ENCODE measurements at regions of chr1 and their contacts with region 1.

Region 1: DNA sequence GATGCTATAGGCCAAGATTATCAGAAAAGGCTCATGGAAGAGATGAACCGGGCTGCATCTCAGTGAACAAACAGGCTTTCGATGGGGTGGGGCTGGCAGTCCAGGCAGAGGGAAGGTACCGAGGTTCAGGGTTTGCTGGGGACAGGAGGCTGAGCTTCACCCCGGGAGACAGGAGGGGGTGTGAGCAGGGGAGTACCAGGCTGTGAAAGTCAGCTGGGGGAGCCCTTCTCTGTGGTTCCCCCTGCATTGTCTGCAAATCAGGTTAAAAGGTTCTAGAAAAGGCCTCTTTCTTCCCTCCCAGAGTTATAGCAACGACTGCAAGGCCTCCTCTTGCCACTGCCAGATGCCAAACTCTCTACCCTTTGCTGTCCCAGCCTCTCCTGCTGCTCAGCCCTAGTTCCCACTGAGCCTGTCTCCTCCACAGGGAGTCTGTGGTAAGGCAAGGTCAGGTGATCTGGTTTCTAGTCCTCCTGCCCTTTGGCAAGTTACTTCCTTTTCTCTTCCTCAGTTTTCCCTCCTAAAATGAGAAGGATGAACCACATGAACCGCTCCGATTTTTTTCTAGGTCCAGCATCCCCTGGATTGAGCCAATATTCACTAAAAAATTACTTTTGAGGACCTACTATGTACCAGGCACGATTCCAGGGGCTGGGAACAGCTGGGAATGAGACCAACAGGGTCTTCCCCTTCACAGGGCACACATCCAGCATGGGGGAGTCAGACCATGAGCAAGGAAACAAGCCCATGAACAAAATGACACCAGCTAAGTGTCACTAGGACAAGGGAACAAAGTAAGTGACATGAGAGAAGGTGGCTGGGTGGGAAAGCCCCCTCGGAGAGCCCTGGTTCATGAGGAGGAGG is 7.2 kb downstream of the LAD1 start:
- DNase-seq: no peak
- H3K4me3 Mint-ChIP-seq: no peak overlapping the region
- H3K27ac Mint-ChIP-seq: no peak overlapping the region
- H3K4me1 Mint-ChIP-seq: peaks cover 9% of the 10 kb centered on the region
- H3K27me3 Mint-ChIP-seq: no peaks in the 10 kb centered on the region
- CTCF ChIP-seq: no peak

Region 2: GRCh38 chr1:201181325-201182123 is 210.4 kb before region 1 on chr1:
- CTCF ChIA-PET with region 1: no interaction called
- POLR2A ChIA-PET with region 1: no interaction called
- intact Hi-C with region 1: no loop called
- DNase-seq: no peak
- H3K4me3 Mint-ChIP-seq: no peak overlapping the region
- H3K27ac Mint-ChIP-seq: no peak overlapping the region
- H3K4me1 Mint-ChIP-seq: peaks cover 14% of the 10 kb centered on the region
- H3K27me3 Mint-ChIP-seq: peaks cover 15% of the 10 kb centered on the region
- CTCF ChIP-seq: no peak

Region 3: DNA sequence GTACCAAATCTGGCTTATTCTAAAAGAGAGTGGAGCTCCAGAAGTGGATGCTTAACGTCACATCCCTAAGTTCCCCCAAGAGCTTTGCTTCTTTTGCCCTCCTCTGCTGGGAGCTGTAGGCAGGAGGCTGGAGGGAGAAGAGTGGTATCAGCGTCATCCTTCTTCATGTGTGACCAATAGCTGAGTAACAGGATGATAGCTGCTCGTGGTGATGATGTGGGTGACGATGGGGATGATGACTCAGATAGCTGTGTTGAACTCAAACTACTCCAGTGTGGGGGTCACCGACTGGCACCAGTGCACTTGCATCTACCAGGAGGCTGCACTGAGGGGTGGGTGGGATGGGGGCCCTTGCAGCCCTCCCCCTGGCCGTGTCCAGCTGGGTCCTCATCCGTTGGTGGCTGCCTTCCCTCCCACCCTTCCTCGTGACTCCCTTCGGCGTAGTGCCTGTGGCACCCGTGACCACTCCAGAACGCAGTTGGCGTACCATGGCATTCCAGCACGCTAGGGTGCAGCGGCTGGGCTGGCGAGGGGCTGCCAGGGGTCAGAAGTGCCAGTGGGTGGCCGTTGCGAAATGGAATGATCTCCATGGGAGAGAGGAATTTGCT is 200.1 kb before region 1 on chr1:
- CTCF ChIA-PET with region 1: no interaction called
- POLR2A ChIA-PET with region 1: no interaction called
- intact Hi-C with region 1: no loop called
- DNase-seq: peak; percentile 72
- H3K4me3 Mint-ChIP-seq: no peak overlapping the region
- H3K27ac Mint-ChIP-seq: no peak overlapping the region
- H3K4me1 Mint-ChIP-seq: peaks cover 7% of the 10 kb centered on the region
- H3K27me3 Mint-ChIP-seq: peaks cover 18% of the 10 kb centered on the region
- CTCF ChIP-seq: no peak

Region 4: DNA sequence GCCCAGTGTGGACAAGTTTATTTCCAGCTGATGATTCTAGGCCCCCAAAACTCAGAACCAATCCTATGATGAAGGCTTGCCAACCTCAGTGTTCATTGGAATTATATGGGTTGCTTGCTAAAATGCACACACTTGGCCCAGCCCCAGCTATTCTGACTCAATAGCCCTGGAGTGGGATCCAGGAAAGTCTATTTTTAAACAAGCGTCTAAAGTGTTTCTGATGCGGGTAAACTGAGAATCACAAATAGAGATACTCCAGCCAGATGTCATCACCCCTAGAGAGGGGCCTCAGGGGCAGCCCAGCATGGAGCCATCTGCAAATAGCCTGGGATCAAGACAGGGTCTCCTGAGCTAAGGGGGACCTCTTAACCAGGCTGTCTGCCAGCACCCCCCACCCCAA is 62.6 kb before region 1 on chr1:
- CTCF ChIA-PET with region 1: no interaction called
- POLR2A ChIA-PET with region 1: no interaction called
- intact Hi-C with region 1: no loop called
- DNase-seq: peak; percentile 76
- H3K4me3 Mint-ChIP-seq: no peak overlapping the region
- H3K27ac Mint-ChIP-seq: no peak overlapping the region
- H3K4me1 Mint-ChIP-seq: peaks cover 11% of the 10 kb centered on the region
- H3K27me3 Mint-ChIP-seq: no peaks in the 10 kb centered on the region
- CTCF ChIP-seq: no peak

Region 5: DNA sequence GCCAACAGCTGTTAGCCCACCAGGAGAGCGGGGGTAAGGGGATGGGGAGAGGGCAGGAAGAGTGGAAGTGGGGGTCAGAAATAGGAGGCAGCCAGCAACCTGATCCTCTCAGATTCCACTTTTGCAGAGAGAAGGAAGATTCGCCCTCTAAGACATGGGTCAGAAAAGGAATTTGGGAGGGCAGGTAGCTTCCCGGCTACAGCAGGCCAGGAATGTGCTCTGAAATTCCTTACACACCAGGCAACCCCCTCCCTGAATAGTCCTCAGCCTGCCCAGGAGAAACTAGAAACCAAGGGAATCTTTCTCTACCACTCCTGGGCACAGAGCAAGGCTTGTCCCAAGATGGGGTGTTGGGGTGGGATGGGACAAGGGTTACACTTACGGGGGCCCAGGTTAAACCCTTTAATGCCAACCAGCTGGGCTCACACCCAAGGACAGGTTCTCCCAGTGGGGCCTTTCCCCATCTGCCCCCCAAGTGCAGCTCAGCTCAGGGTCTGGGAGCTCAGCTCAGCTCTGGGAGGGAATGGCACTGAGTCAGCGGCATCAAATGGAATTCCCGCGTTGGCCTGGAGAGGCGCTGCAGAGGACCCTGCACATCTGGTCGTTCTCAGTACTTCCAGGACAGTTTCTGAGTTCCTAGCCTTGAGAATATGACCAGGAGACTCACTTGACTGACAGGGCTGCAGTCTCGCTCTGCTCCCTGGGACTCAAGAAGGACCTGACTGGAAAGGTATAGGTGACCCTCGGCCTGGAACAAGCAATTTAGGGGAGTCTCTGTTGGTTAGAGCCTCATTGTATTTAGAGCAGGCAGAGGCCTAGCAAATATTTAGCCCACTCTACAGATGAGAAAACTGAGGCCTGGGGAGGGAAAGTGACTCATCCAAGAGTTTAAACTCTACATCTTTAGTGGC is 15.2 kb before region 1 on chr1:
- CTCF ChIA-PET with region 1: interaction called, 61 read pairs
- POLR2A ChIA-PET with region 1: interaction called, 3 read pairs
- intact Hi-C with region 1: no loop called
- DNase-seq: peak; percentile 80
- H3K4me3 Mint-ChIP-seq: no peak overlapping the region
- H3K27ac Mint-ChIP-seq: no peak overlapping the region
- H3K4me1 Mint-ChIP-seq: no peaks in the 10 kb centered on the region
- H3K27me3 Mint-ChIP-seq: peaks cover 37% of the 10 kb centered on the region
- CTCF ChIP-seq: peak; percentile 67

Region 6: GRCh38 chr1:201676197-201676596 is 284.3 kb after region 1 on chr1:
- CTCF ChIA-PET with region 1: no interaction called
- POLR2A ChIA-PET with region 1: no interaction called
- intact Hi-C with region 1: no loop called
- DNase-seq: peak; percentile 42
- H3K4me3 Mint-ChIP-seq: no peak overlapping the region
- H3K27ac Mint-ChIP-seq: no peak overlapping the region
- H3K4me1 Mint-ChIP-seq: peaks cover 6% of the 10 kb centered on the region
- H3K27me3 Mint-ChIP-seq: no peaks in the 10 kb centered on the region
- CTCF ChIP-seq: no peak

Measured in MCF 10A (cell line).